ENCODE measurements at regions of chr7 and their contacts with region 1.

Region 1: DNA sequence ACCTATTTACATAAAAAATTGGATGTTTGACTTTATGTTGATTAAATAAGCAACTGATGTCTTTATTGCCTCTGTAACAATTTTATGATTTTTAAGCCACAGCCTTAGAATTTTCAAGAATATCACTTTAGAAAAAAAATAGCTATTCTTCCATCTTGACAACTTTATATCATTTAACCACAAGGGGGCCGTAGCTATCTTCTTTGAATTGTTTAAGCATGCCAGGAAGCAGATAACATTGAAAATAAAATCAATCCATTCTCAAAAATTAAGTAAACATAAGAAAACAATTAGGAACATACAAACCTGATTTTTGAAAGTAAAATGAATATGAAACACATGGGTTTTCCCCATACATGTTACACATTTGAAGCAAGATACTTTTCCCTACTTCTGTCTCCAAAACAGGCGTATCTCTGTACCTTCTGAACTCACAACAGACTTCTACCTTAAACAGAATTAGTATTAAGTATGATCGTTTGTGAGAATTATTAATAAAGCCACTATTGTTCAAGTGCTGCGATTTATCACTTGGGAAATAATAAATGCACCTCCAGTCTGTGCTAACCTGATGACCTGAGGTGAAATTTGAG is 209.0 kb downstream of the CACNA2D1 start:
- DNase-seq: no peak
- ATAC-seq: no peak
- H3K4me3 Mint-ChIP-seq: no peak overlapping the region
- H3K27ac Mint-ChIP-seq: no peak overlapping the region
- H3K4me1 Mint-ChIP-seq: no peaks in the 10 kb centered on the region
- H3K27me3 Mint-ChIP-seq: no peaks in the 10 kb centered on the region

Region 2: GRCh38 chr7:82572195-82572880 is 337.8 kb after region 1 on chr7:
- CTCF ChIA-PET with region 1: interaction called, 3 read pairs
- POLR2A ChIA-PET with region 1: no interaction called
- intact Hi-C with region 1: loop called (anchors 1 to 5 kb)
- DNase-seq: peak; percentile 83
- ATAC-seq: peak; percentile 61
- H3K4me3 Mint-ChIP-seq: no peak overlapping the region
- H3K27ac Mint-ChIP-seq: no peak overlapping the region
- H3K4me1 Mint-ChIP-seq: no peaks in the 10 kb centered on the region
- H3K27me3 Mint-ChIP-seq: no peaks in the 10 kb centered on the region

Region 3: DNA sequence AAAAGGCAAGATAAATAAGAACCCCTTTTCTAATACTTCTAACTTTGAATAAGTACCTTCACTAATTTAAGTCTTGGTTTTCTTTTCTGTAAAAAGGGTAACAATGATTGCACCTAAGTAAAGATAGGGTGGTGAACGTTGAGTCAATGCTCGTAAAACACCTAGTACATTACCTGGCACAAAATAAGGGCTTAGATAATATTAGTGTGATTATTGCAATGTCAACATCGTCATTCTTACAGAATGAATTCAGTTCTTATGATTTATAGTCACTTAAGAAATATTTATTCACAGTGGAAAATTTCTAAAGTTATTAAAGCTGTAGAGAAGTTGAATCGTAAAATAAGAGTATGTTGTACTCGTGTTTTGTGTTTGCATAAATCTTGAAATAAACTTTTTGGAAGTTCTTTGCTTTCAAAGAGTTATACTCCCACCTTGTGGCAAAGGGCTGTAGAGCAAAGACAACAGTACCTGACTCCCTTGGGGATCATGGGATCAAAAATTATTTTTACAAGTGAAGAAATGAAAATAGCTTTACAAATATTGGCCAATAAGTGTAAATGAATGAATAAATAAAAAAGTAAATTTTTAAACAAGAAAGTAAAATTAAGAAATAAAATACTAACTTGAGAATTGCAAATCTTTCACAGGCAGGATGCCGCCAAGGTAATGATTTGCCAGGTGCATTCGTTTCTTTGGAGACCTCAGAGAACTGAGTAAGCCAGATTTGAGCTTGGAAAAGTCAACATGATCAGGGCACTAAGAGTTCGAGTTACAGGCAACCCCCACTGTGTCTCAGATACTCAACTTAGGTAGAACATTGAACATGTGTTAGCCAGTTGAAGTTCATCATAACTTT is 494.8 kb after region 1 on chr7:
- CTCF ChIA-PET with region 1: no interaction called
- POLR2A ChIA-PET with region 1: no interaction called
- intact Hi-C with region 1: loop called in 1 of 2 experiments (anchors 2 kb)
- DNase-seq: no peak
- ATAC-seq: no peak
- H3K4me3 Mint-ChIP-seq: no peak overlapping the region
- H3K27ac Mint-ChIP-seq: no peak overlapping the region
- H3K4me1 Mint-ChIP-seq: no peaks in the 10 kb centered on the region
- H3K27me3 Mint-ChIP-seq: no peaks in the 10 kb centered on the region